AG04449 (cell line): ENCODE measurements at regions of chr11 and their contacts with region 1.

Region 1: DNA sequence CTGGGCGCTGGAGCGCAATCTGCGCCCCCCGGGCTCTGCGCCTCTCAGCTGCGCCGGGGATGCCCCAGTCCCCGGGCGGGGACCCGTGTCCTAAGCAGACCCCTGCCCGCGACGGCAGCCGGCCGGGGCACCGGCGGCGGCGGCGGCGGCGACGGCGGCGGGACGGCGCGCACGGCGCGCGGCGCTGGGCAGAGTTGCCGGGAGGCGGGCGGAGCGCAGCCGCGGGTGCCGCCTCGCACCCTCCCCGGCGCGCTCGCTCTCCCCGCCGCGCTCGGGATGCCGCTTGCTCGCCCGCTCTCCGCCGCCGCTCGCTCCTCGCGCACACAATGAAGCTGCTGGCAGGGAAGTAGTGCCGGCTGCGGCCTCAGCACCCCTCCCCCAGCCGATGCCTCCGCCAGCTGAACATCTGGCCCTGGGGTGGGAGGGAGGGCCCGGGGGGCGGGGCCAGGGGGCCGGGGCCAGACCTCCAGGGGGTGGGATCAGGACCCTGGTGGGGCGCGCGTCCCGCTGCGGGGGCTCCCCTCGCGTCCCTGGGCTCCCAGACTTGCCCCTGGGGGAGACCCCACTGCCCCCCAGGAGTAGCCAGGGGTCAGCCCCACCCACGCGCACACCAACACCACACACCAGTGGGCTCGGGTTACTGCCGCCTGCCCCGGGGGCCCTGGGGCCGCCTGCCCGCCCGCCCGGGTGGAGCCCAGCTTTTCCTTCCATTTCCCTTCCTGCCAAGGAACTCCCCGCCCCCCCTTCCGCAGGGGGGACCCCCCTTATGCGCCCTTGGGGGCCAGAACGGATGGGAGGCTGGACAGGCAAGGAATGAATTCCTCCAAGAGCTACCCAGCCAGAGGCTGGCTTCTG is at the start of gene RCOR2:
- DNase-seq: no peak
- H3K4me3 ChIP-seq: peak within 1 kb of the TSS; percentile 57
- CTCF ChIP-seq: no peak

Region 2: GRCh38 chr11:63933459-63933858 is 16.4 kb after region 1 on chr11:
- CTCF ChIA-PET with region 1: interaction called, 13 read pairs
- POLR2A ChIA-PET with region 1: no interaction called
- DNase-seq: no peak
- H3K4me3 ChIP-seq: no peak overlapping the region
- CTCF ChIP-seq: no peak